Heart left ventricle (tissue), 16 donors: ENCODE measurements at regions of chr6 and their contacts with region 1.

Region 1: DNA sequence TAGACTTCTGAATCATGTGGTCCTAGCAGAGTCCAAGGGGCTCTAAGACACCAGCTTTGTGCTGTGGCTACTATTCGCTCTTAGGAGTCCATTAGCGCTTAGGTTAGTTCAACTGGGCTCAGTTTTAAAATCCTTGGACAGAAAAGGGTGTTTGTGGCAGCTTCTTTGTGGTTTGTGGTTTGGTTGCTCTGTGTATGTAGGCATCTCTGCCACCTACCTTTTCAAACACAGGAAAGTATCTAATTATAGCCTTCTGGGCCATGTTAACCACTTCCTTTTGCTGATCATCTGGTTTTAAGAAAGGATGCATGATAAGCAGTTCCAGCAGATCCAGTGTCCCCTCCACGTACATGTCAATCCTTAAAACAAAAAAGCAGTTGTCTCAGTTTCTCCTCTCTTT is 10.8 kb downstream of the GSTA4 start:
- DNase-seq: no peak
- ATAC-seq: no peak
- H3K4me3 ChIP-seq: no peak overlapping the region
- H3K27ac ChIP-seq: no peak overlapping the region
- H3K4me1 ChIP-seq: peaks cover 0 to 17% (median 0%) of the 10 kb centered on the region in 12 donors
- H3K27me3 ChIP-seq: no peaks in the 10 kb centered on the region
- CTCF ChIP-seq: no peak
- POLR2A ChIP-seq: no peak

Region 2: GRCh38 chr6:52877168-52877567 is 107.1 kb before region 1 on chr6:
- intact Hi-C with region 1: loop called in 1 of 10 experiments (anchors 10 kb)
- DNase-seq: no peak
- ATAC-seq: no peak
- H3K4me3 ChIP-seq: no peak overlapping the region
- H3K27ac ChIP-seq: no peak overlapping the region
- H3K4me1 ChIP-seq: peaks cover 0 to 4% (median 0%) of the 10 kb centered on the region in 12 donors
- H3K27me3 ChIP-seq: no peaks in the 10 kb centered on the region
- CTCF ChIP-seq: no peak
- POLR2A ChIP-seq: no peak

Region 3: DNA sequence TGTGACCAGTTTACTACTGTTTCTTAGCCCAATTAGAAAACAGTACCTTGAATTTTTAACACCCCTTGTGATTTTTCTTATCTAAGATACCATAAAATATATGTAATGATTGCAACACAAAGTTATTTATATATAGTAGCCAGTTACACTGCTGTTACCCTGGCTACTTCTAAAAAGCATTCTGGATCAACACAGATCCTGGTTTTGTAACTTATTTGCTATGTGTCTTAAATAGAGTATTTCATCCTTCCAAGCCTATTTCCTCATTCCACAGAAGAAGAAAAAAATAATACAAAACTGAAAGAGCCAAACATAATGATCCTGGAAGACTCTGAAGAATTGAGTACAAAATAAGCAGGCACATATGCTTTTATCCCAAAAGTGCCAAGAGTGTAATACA is 29.8 kb after region 1 on chr6:
- intact Hi-C with region 1: no loop called
- DNase-seq: no peak
- ATAC-seq: no peak
- H3K4me3 ChIP-seq: no peak overlapping the region
- H3K27ac ChIP-seq: peak overlapping the region in 1 of 12 donors; percentile 43
- H3K4me1 ChIP-seq: no peaks in the 10 kb centered on the region
- H3K27me3 ChIP-seq: no peaks in the 10 kb centered on the region
- CTCF ChIP-seq: no peak
- POLR2A ChIP-seq: no peak

Region 4: DNA sequence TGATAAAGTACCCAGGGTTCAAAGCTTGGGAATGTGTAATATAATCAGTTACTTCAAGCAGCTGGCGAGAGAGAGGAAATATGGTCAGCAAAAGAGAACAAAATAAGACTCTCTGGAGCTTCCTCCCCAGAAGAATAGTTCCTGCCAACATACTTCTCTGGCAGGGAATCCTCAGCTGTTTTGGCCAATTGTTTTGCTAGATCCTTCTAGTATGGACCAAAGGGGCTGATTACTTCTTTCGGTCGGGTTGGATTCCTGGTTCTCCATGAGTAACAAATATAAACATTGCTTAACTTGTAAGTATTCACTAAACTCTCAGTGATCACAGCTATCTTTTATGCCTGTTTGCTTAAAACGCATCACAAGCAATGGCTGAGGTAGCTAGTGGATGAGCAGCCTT is 49.5 kb after region 1 on chr6:
- intact Hi-C with region 1: no loop called
- DNase-seq: no peak
- ATAC-seq: peak in 2 of 4 donors; percentile 16 to 25
- H3K4me3 ChIP-seq: no peak overlapping the region
- H3K27ac ChIP-seq: peak overlapping the region in 7 of 12 donors; percentile 32 to 62 (median 55)
- H3K4me1 ChIP-seq: peaks cover 0 to 52% (median 25%) of the 10 kb centered on the region in 12 donors
- H3K27me3 ChIP-seq: no peaks in the 10 kb centered on the region
- CTCF ChIP-seq: no peak
- POLR2A ChIP-seq: no peak